A673 (cell line): ENCODE measurements at regions of chr4 and their contacts with region 1.

Region 1: DNA sequence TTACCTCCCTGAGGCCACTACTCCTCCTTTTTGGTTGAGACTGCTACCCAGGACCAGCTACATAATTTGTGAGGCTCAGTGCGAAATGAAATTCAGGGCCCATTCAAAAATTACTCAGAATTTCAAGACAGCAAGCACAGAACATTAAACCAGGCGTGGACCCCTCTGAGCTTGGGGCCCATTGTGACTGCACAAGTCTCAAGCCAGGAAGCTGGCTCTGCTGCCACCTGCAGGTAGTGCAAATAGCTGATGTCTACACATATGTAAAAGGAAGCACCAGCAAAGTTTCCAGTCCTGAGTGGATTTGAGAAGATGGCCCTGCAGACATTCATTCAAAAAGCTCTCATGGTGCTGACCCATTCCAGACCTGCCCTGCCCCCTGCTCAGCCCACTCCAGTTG is 213.4 kb upstream of the LNX1 start:
- DNase-seq: peak; percentile 2
- H3K4me3 ChIP-seq: no peak overlapping the region
- H3K27ac ChIP-seq: no peak overlapping the region
- H3K4me1 ChIP-seq: no peaks in the 10 kb centered on the region
- H3K27me3 ChIP-seq: no peaks in the 10 kb centered on the region
- CTCF ChIP-seq: peak; percentile 32; the same call in 1 of the 2 replicates

Region 2: GRCh38 chr4:53755656-53756055 is 49.1 kb before region 1 on chr4:
- CTCF ChIA-PET with region 1: no interaction called
- POLR2A ChIA-PET with region 1: no interaction called
- intact Hi-C with region 1: loop called (anchors 5 kb)
- DNase-seq: no peak
- H3K4me3 ChIP-seq: no peak overlapping the region
- H3K27ac ChIP-seq: no peak overlapping the region
- H3K4me1 ChIP-seq: no peaks in the 10 kb centered on the region
- H3K27me3 ChIP-seq: no peaks in the 10 kb centered on the region
- CTCF ChIP-seq: no peak